AG04450 (cell line): ENCODE measurements at regions of chr22 and their contacts with region 1.

Region 1: GRCh38 chr22:19700790-19701419 is 13.4 kb upstream of the SEPTIN5 start:
- DNase-seq: no peak
- H3K4me3 ChIP-seq: no peak overlapping the region
- H3K27ac ChIP-seq: no peak overlapping the region
- H3K27me3 ChIP-seq: peaks cover 15% of the 10 kb centered on the region
- CTCF ChIP-seq: no peak

Region 2: DNA sequence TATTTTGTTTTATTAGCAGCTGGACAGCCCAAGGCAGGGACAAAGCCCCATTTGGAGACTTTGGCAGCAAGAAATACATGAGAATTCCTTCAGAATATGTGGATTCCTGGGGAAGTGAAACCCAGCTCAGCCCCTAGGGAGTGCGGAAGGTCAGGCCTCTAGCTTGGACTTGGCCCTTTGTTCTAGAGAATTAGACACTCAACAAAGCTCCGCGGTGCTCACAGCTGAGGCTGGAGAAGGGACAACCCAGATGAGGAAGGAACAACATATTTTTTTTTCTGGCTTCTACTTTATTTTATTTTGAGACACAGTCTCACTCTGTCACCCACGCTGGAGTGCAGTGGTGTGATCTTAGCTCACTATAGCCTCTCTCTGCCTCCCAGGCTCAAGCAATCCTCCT is 31.3 kb before region 1 on chr22:
- CTCF ChIA-PET with region 1: no interaction called
- POLR2A ChIA-PET with region 1: no interaction called
- DNase-seq: no peak
- H3K4me3 ChIP-seq: no peak overlapping the region
- H3K27ac ChIP-seq: no peak overlapping the region
- H3K27me3 ChIP-seq: peaks cover 26% of the 10 kb centered on the region
- CTCF ChIP-seq: no peak

Region 3: DNA sequence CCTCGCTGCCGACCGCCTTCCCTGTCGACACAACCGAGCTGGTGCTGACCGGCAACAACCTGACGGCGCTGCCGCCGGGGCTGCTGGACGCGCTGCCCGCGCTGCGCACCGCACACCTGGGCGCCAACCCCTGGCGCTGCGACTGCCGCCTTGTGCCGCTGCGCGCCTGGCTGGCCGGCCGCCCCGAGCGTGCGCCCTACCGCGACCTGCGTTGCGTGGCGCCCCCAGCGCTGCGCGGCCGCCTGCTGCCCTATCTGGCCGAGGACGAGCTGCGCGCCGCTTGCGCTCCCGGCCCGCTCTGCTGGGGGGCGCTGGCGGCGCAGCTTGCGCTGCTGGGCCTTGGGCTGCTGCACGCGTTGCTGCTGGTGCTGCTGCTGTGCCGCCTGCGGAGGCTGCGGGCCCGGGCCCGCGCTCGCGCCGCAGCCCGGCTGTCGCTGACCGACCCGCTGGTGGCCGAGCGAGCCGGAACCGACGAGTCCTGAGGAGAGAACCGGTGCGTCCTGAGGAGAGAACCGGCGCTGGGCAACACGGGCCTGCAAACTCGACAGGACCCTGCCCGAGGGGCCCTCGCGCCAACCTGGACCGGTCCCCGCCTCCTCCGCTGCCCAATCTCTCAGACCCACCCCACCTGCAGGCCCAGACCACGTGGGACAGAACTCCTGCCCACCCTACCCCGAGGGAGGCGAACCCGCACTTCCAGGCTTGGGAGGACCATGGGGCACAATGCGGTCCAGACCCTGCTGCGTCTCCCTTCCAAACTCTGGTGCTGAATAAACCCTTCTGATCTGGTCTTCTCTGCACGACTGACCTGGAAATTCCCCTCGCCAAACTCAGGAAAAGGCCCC is 23.3 kb after region 1 on chr22:
- CTCF ChIA-PET with region 1: no interaction called
- POLR2A ChIA-PET with region 1: interaction called, 13 read pairs
- DNase-seq: no peak
- H3K4me3 ChIP-seq: no peak overlapping the region
- H3K27ac ChIP-seq: no peak overlapping the region
- H3K27me3 ChIP-seq: peaks cover 7% of the 10 kb centered on the region
- CTCF ChIP-seq: no peak